ENCODE measurements at regions of chr2 and their contacts with region 1.

Region 1: DNA sequence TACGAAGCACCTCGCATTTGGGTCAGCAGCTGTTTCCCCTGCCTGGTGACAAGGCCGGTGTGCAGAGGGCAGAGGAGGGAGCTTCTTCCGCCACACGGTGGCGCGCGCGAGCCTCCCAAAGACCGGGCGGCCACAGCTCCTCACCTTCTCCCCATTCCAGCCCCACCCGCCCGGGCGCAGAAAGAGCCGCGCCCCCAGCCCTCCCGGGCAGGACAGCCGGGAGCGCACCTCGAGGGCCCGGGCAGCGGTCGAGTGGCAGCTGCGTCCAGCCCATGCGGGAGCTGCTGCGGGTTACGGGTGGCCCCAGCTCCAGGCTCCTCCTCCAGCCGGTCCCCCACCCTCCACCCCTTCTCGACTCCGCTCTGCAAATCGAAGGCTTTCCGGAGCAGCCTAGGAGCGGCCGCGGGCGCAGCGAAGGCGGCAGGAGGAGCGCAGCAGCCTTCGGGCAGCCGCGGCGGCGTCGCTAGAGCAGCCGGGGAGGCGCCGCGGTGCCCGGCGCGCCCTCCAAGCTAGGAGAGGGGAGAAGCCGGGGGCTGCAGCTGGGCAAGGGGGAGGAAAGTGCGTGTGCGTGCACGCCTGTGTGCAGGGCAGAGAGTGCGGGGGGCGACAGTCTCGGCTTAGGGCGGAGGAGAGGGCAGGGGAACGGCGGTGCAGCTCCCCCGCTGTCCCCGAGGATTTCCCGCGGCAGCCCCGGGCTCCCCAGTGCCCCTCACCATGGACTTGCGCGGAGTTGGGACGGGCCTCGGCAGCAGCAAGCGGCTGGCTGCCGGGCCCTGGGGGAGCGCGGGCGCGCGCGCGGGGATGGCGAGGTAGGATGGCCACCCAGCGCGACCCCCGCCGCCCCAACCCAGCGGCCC is at the start of gene CCDC85A:
- DNase-seq: peak; percentile 75
- ATAC-seq: peak; percentile 96
- H3K4me3 Mint-ChIP-seq: peak within 1 kb of the TSS; percentile 3
- H3K27ac Mint-ChIP-seq: no peak within 1 kb of the TSS
- H3K4me1 Mint-ChIP-seq: peaks cover 3% of the 10 kb centered on the region
- H3K27me3 Mint-ChIP-seq: peaks cover 38% of the 10 kb centered on the region
- total RNA-seq, gene CCDC85A: not detected

Region 2: DNA sequence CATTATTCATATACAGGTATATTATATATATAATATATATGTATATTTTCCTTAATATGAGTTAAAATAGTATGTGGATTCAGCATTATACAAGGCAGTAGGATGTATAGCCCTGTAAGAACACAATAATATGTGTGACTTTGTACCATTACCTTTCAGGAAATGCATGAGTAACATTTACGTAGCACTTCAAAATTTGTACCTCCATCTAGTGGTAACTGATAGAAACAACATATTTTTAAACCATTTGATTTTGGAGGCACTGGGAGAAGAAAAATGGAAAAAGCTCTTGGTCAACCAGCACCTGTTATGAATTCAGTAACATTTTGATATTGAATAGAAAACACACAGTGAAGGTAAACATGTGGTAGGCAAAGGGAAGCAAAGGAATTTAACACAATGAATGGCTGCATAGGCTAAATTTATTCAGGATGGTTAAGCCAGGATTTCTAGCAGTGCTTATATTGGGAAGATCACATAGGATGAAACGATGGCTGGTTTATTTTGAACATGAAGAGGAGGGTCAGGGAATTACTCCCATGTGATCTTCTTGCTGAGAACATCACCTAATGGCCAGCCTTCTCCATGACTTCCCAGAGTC is 565.4 kb after region 1 on chr2:
- CTCF ChIA-PET with region 1: interaction called, 13 read pairs
- POLR2A ChIA-PET with region 1: no interaction called
- DNase-seq: no peak
- ATAC-seq: no peak
- H3K4me3 Mint-ChIP-seq: no peak overlapping the region
- H3K27ac Mint-ChIP-seq: no peak overlapping the region
- H3K4me1 Mint-ChIP-seq: no peaks in the 10 kb centered on the region
- H3K27me3 Mint-ChIP-seq: no peaks in the 10 kb centered on the region

Measured in activated CD8-positive, alpha-beta T cell treated with anti-CD3 and anti-CD28 coated beads, Interleukin-2, amount 10 ng/mL, durations not matched to agents 7 days and 5 days (primary cell).